Right ventricle myocardium inferior (tissue), 1 donor: ENCODE measurements at regions of chr4 and their contacts with region 1.

Region 1: GRCh38 chr4:139030614-139031235 is 15.1 kb downstream of the NOCT start:
- DNase-seq: no peak
- ATAC-seq: peak; percentile 34

Region 2: GRCh38 chr4:139083956-139084803 is 53.5 kb after region 1 on chr4:
- intact Hi-C with region 1: loop called (anchors 1 kb)
- DNase-seq: peak; percentile 94
- ATAC-seq: peak; percentile 81

Region 3: GRCh38 chr4:139177868-139178611 is 147.3 kb after region 1 on chr4:
- intact Hi-C with region 1: loop called (anchors 5 kb)
- DNase-seq: peak; percentile 98
- ATAC-seq: peak; percentile 88

Region 4: DNA sequence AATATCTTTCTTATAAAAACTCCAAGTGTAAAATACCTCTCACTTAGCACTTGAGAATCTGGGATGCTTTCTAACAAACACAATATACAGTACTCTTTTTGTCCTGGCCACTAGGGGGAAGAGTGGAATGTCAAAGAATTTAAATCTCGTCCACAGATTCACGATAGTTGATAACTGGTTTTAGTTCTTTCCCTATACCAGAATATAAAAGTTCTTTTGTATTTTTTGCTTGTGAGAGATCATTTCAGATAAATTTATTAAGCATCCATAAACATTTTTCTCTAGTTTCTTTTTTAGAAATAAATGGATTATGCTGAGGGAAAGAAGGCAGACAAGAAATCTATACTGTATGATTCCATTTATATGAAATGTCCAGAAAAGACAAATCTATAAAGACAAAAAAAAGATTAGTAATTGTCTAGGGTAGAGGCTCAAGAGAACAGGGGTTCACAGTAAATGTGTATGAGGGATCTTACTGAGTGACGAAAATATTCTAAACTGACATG is 198.9 kb after region 1 on chr4:
- intact Hi-C with region 1: loop called (anchors 5 kb)
- DNase-seq: no peak
- ATAC-seq: no peak

Region 5: GRCh38 chr4:139301113-139301820 is 270.5 kb after region 1 on chr4 and contains the start of gene NAA15:
- intact Hi-C with region 1: loop called (anchors 2 kb)
- DNase-seq: peak; percentile 98
- ATAC-seq: peak; percentile 98
- total RNA-seq, gene NAA15: 36.5 TPM

Region 6: DNA sequence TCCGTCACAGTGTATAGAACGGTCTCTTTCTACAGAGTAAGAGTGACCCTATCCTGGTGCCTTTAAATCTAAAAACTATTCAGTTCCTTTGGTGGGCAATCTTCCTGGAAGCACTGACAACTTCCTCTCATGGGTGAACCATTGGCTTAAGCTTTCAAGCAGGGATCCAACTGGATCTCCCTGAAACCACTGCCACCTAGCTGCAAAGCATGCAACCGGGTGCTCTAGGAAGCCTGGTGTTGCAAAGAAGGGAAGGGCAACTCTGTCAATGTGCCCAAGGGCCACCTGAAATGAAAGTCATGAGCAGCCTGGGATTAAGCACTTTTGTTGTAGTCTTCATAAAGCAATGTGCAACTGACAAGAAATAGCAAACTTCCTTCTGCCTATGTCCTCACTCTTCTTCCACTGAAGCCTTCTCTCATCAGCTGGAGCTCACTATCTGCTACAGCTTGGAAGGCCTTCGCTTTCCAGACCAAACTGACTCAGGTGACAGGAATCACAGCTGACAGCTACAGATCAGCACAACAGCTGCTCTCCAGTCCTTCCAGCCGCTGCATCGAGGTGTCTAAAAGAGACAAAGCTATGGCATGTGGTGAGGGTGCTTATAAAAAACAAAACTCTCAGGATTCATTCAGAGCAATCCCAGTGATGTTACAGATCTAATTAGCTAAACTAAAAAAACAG is 479.1 kb after region 1 on chr4:
- intact Hi-C with region 1: loop called (anchors 10 kb)
- DNase-seq: no peak
- ATAC-seq: peak; percentile 66

Region 7: DNA sequence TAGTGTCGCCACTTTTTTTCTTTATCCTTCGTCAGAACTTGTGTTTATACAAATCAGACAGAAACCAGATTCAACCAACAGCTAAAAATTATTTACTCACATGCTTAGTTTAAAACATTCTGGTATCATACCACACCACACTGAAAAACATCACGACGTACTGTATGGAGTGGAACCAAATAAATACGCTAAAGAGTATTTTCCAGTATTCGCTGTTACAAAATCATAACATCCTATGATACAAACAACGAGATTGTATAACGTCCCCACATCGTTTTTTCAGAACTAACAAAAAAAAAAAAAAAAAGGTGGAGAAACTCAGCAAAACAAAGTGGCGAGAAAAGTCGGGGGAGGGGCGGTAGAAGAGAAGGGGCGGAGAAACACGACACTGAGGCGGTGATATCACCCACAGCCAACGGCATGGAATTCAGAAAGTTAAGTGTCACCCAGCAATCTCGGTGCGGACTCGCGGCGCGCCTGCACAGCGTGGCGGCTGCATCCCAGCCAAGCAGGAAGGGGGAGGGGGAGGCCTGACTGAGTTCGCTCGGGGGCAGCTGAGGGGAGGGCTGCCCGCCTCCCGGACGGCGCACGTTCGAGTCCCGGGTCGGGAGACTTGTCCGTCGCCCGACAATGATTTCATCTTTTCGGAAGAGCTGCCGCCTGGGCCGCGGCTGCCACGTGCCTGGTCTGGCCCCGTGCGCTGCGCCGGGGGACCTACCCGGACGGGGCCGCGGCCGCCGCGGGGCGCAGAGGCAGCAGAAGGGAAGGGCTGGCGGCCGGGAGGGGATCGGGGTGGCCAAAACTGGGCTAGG is 524.4 kb after region 1 on chr4:
- intact Hi-C with region 1: loop called (anchors 10 kb)
- DNase-seq: peak; percentile 93
- ATAC-seq: peak; percentile 79